CD14-positive monocyte (primary cell): ENCODE measurements at regions of chr10 and their contacts with region 1.

Region 1: DNA sequence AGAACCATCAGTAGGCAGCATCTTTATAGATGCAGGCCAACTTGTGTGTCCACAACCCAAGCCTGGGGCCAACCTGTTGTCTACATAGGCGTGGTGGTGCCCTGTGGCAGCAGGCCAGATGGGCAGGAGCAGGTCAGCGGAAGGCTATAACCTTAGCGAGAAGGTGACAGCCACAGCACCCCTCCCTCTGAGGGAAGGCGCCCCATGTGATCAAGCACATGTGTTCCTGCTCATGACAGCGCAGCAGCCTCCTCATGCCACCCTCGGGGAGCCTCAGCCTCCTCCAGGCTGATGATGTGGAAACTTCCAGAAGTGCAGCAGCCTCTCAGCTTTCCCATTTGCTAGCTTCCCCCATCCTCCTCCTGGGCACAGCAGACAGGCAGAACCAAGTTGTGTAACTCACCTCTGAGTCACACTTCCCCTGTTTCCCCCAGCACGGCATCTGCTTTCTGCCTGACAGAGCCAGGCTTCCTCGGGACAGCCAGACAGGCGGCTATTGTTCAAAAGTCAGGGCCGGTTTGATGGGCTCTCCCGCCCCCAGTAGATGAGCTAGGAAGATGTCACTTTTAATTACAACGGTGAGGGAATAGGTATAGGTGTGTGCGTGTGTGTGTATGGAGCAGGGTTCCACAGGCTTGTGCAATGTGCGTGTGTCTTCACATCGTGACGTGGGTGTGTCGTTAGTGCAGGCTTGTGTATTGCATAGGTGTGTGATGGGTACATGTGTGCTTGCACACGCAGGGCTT is 312.0 kb upstream of the ZMIZ1 start:
- DNase-seq: peak; percentile 99 to 100 (median 100)
- H3K4me3 ChIP-seq: peak overlapping the region in 1 of 3 experiments; percentile 1
- H3K4me3 Mint-ChIP-seq: peak overlapping the region; percentile 50 to 83
- H3K27ac ChIP-seq: peak overlapping the region; percentile 68 to 91
- H3K27ac Mint-ChIP-seq: peak overlapping the region; percentile 93 to 97 (median 96)
- H3K4me1 ChIP-seq: peaks cover 44 to 55% of the 10 kb centered on the region in 2 donors
- H3K4me1 Mint-ChIP-seq: peaks cover 61% of the 10 kb centered on the region
- H3K27me3 ChIP-seq: no peaks in the 10 kb centered on the region
- H3K27me3 Mint-ChIP-seq: peaks cover 13 to 14% (median 14%) of the 10 kb centered on the region in 3 donors
- CTCF ChIP-seq: no peak

Region 2: GRCh38 chr10:78255796-78256638 is 500.8 kb before region 1 on chr10:
- intact Hi-C with region 1: loop called in 1 of 2 experiments (anchors 5 kb)
- DNase-seq: peak; percentile 88 to 96 (median 94)
- H3K4me3 ChIP-seq: no peak overlapping the region
- H3K4me3 Mint-ChIP-seq: no peak overlapping the region
- H3K27ac ChIP-seq: peak overlapping the region in 1 of 2 donors; percentile 58
- H3K27ac Mint-ChIP-seq: peak overlapping the region; percentile 10 to 88 (median 72)
- H3K4me1 ChIP-seq: peaks cover 46 to 56% of the 10 kb centered on the region in 2 donors
- H3K4me1 Mint-ChIP-seq: peaks cover 68% of the 10 kb centered on the region
- H3K27me3 ChIP-seq: no peaks in the 10 kb centered on the region
- H3K27me3 Mint-ChIP-seq: peaks cover 0 to 17% (median 6%) of the 10 kb centered on the region in 3 donors
- CTCF ChIP-seq: no peak

Region 3: DNA sequence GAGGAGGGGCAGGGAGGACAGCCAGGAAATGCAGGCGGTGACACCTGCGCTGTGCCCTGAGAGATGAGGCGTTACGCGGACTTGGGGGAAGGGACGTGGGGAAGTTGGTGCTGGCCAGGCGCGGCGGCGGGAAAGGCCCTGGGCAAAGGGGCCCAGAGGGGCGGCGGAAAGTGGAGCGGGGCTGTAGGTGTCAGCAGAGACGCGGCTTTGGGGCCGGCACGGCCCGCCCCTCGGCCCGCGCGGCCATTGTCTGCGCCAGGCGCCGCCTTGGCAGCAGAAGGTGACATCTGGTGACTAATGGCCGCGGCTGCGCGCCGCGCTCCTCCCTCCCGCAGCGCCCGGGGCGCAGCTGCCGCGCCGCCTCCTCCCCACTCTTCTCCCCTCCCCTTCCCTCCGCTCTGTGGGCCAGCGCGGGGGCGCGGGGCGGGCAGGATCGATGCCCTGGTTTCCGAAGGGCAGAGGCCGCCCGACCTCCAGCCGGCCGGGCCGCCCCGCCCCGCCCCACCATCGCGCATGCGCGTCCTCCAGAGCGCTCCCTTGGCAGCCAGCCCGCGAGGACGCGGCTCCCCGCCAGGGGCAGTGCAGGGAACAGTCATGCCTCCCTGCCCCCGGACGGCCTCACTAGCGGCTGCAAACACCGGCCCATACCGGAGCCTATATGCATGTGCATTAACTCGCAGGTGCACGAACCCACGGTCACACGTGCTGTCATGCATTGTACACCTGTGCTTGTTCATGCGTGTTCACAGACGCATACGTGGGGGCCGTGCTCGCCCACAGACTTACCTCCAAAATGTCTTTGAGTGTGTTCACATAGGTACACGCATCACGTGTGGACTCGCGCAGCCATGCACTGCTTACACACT is 453.6 kb before region 1 on chr10:
- intact Hi-C with region 1: loop called in 1 of 2 experiments (anchors 10 kb)
- DNase-seq: peak; percentile 84 to 89 (median 87)
- H3K4me3 ChIP-seq: peak overlapping the region; percentile 56 to 77 (median 58)
- H3K4me3 Mint-ChIP-seq: peak overlapping the region; percentile 84 to 93
- H3K27ac ChIP-seq: peak overlapping the region; percentile 85 to 91
- H3K27ac Mint-ChIP-seq: peak overlapping the region; percentile 93 to 97 (median 95)
- H3K4me1 ChIP-seq: peaks cover 37% of the 10 kb centered on the region in 2 donors
- H3K4me1 Mint-ChIP-seq: peaks cover 39% of the 10 kb centered on the region
- H3K27me3 ChIP-seq: no peaks in the 10 kb centered on the region
- H3K27me3 Mint-ChIP-seq: peaks cover 1 to 6% (median 4%) of the 10 kb centered on the region in 3 donors
- CTCF ChIP-seq: peak; percentile 84

Region 4: GRCh38 chr10:78579995-78580394 is 176.8 kb before region 1 on chr10:
- intact Hi-C with region 1: loop called in 1 of 2 experiments (anchors 10 kb)
- DNase-seq: no peak
- H3K4me3 ChIP-seq: no peak overlapping the region
- H3K4me3 Mint-ChIP-seq: no peak overlapping the region
- H3K27ac ChIP-seq: no peak overlapping the region
- H3K27ac Mint-ChIP-seq: peak overlapping the region in 2 of 7 donors; percentile 85 to 97
- H3K4me1 ChIP-seq: peaks cover 22 to 26% of the 10 kb centered on the region in 2 donors
- H3K4me1 Mint-ChIP-seq: peaks cover 40% of the 10 kb centered on the region
- H3K27me3 ChIP-seq: no peaks in the 10 kb centered on the region
- H3K27me3 Mint-ChIP-seq: peaks cover 4 to 7% (median 7%) of the 10 kb centered on the region in 3 donors
- CTCF ChIP-seq: no peak

Region 5: GRCh38 chr10:78972947-78973900 is 216.4 kb after region 1 on chr10:
- intact Hi-C with region 1: loop called in 1 of 2 experiments (anchors 10 kb)
- DNase-seq: peak; percentile 87 to 90 (median 89)
- H3K4me3 ChIP-seq: peak overlapping the region; percentile 32 to 73 (median 42)
- H3K4me3 Mint-ChIP-seq: peak overlapping the region; percentile 67 to 70
- H3K27ac ChIP-seq: peak overlapping the region; percentile 27 to 92
- H3K27ac Mint-ChIP-seq: peak overlapping the region in 6 of 7 donors; percentile 61 to 99 (median 82)
- H3K4me1 ChIP-seq: peaks cover 27 to 33% of the 10 kb centered on the region in 2 donors
- H3K4me1 Mint-ChIP-seq: peaks cover 42% of the 10 kb centered on the region
- H3K27me3 ChIP-seq: no peaks in the 10 kb centered on the region
- H3K27me3 Mint-ChIP-seq: peaks cover 5 to 21% (median 6%) of the 10 kb centered on the region in 3 donors
- CTCF ChIP-seq: no peak

Region 6: DNA sequence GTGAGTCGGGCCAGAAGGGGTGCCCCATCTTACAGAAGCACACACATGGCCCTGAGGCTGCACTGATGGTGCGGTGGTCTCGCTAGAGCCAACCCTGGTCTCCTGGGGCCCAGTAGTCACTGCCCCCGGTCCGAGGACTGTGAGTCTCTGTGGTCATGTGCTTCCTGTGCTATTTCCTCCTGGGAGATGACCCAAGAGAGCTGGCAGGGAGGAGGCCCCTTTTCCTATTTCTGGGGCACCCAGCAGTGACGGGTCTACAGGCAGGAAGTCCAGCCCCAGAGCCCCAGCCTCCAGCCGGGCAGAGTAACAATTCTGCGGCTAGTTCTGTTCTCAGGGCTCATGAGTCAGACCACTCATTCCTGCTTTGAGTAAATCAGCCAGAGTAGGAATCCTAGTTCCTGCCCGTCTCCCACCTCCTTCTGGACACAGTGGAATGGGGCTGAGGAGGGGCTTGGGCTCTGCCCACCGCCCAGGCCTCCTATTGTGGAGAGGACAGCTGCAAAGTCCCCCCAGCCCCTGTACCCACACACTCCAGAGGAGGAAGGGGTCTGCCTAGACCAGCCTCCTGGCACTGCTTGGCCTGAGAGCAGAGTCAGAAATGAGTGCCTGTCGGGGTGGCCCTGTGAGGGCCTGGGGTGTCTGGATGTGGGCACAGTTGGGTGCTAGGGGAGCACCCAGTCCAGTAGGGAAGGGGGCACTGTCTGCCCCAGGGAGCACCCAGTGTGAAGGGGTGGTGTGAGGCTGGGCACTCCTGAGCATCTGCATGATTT is 510.0 kb after region 1 on chr10:
- intact Hi-C with region 1: loop called in 1 of 2 experiments (anchors 10 kb)
- DNase-seq: peak; percentile 96 to 98 (median 98)
- H3K4me3 ChIP-seq: peak overlapping the region in 1 of 3 experiments; percentile 42
- H3K4me3 Mint-ChIP-seq: peak overlapping the region; percentile 43 to 74
- H3K27ac ChIP-seq: peak overlapping the region; percentile 98 to 100
- H3K27ac Mint-ChIP-seq: peak overlapping the region; percentile 99 to 100 (median 99)
- H3K4me1 ChIP-seq: peaks cover 79 to 86% of the 10 kb centered on the region in 2 donors
- H3K4me1 Mint-ChIP-seq: peaks cover 95% of the 10 kb centered on the region
- H3K27me3 ChIP-seq: no peaks in the 10 kb centered on the region
- H3K27me3 Mint-ChIP-seq: peaks cover 0 to 3% (median 0%) of the 10 kb centered on the region in 3 donors
- CTCF ChIP-seq: no peak